WTC11 (cell line): ENCODE measurements at regions of chr15 and their contacts with region 1.

Region 1: GRCh38 chr15:40338041-40338657 is 2.6 kb downstream of the CCDC9B start:
- DNase-seq: peak; percentile 92
- ATAC-seq: peak; percentile 82
- H3K4me3 Mint-ChIP-seq: 0 out of 2 replicates have a peak overlapping the region, but pooled peaks have one; percentile 27
- H3K27ac Mint-ChIP-seq: no peak overlapping the region
- H3K4me1 Mint-ChIP-seq: peaks cover 42% of the 10 kb centered on the region
- H3K27me3 Mint-ChIP-seq: peaks cover 5% of the 10 kb centered on the region
- CTCF ChIP-seq: peak; percentile 87

Region 2: DNA sequence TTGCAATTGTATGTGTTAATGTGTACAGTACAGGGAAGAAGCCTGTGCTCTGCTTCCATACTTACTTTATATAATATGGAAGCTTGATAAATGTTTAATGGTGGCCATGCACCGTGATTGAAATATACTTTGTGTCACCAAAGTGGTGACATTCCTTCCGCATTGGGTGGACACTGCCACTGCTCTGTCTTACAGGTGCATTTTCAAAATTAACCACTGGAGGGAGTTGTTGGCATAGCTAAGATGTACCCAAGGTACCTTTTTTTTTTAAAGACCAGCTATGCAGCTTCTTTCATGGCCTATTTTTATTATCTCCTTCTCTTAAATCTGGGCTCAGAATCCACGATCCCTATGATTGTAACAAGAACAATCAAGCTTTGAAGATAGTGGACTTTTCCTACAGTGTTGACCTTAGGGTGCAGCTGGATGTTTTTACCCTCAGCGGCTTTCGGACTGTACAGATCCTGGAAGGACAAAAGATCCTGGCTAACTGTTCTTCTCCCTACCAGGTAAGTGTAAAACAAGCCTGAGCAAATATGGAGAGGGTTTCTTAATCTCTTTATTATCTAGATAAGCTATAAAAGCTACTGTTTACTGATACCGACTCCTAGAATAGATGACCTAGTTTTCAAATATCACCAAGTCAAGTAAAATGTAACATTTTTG is 120.9 kb before region 1 on chr15:
- CTCF ChIA-PET with region 1: interaction called, 15 read pairs
- POLR2A ChIA-PET with region 1: no interaction called
- DNase-seq: no peak
- ATAC-seq: peak; percentile 87
- H3K4me3 Mint-ChIP-seq: no peak overlapping the region
- H3K27ac Mint-ChIP-seq: no peak overlapping the region
- H3K4me1 Mint-ChIP-seq: no peaks in the 10 kb centered on the region
- H3K27me3 Mint-ChIP-seq: no peaks in the 10 kb centered on the region
- CTCF ChIP-seq: peak; percentile 71

Region 3: DNA sequence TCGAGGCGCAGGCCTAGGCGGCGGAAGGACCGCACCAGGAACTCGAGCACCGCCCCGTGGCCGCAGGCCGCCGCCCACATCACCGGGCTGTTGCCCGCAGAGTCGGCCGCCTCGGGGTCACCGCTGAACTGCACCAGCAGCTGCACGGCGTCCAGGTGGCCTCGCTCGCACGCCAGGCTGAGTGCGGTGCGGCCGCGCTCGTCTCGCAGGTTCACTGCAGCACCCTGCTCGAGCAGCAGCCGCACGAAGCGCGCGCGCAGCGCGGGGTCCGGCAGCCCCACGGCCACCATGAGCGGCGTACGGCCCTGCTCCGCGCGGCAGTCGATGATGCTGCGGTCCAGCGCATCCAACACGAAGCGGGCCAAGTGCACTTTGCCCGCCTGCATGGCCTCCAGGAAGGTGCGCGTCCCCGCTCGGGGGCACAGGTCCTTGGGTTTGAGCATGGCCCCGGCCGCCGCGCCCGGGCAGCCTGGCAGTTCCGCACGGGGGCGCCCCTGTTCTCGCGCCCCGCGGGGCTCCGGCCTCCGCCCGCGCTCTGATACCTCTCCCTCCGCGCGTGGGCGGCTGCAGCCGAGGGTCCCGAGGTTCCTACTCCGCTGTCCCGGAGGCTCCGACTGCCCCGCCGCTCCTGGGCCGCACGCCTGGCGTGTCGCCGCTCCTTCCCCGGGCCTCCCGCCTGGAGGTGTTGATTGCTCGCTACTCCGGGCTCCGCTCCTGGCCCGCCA is 55.8 kb before region 1 on chr15:
- CTCF ChIA-PET with region 1: interaction called, 181 read pairs
- POLR2A ChIA-PET with region 1: no interaction called
- DNase-seq: peak; percentile 68
- ATAC-seq: peak; percentile 14
- H3K4me3 Mint-ChIP-seq: peak overlapping the region; percentile 63
- H3K27ac Mint-ChIP-seq: no peak overlapping the region
- H3K4me1 Mint-ChIP-seq: peaks cover 56% of the 10 kb centered on the region
- H3K27me3 Mint-ChIP-seq: peaks cover 76% of the 10 kb centered on the region
- CTCF ChIP-seq: peak; percentile 28; the same call in 1 of the 2 replicates

Region 4: GRCh38 chr15:40307421-40308211 is 30.5 kb before region 1 on chr15 and contains the start of gene PLCB2:
- CTCF ChIA-PET with region 1: interaction called, 76 read pairs
- POLR2A ChIA-PET with region 1: interaction called, 3 read pairs
- DNase-seq: peak; percentile 44
- ATAC-seq: peak; percentile 55
- H3K4me3 Mint-ChIP-seq: peak within 1 kb of the TSS; percentile 22; the same call in 1 of the 2 replicates
- H3K27ac Mint-ChIP-seq: no peak within 1 kb of the TSS
- H3K4me1 Mint-ChIP-seq: peaks cover 35% of the 10 kb centered on the region
- H3K27me3 Mint-ChIP-seq: peaks cover 10% of the 10 kb centered on the region; the same call in 1 of the 2 replicates
- CTCF ChIP-seq: no peak
- total RNA-seq, gene PLCB2: 14.2 to 18.5 TPM (median 15.2 TPM) in 3 replicates

Region 5: GRCh38 chr15:40367686-40368611 is 29.8 kb after region 1 on chr15:
- CTCF ChIA-PET with region 1: interaction called, 87 read pairs
- POLR2A ChIA-PET with region 1: no interaction called
- DNase-seq: peak; percentile 90
- ATAC-seq: peak; percentile 89
- H3K4me3 Mint-ChIP-seq: peak overlapping the region; percentile 52
- H3K27ac Mint-ChIP-seq: no peak overlapping the region
- H3K4me1 Mint-ChIP-seq: peaks cover 21% of the 10 kb centered on the region
- H3K27me3 Mint-ChIP-seq: peaks cover 45% of the 10 kb centered on the region
- CTCF ChIP-seq: peak; percentile 77

Region 6: DNA sequence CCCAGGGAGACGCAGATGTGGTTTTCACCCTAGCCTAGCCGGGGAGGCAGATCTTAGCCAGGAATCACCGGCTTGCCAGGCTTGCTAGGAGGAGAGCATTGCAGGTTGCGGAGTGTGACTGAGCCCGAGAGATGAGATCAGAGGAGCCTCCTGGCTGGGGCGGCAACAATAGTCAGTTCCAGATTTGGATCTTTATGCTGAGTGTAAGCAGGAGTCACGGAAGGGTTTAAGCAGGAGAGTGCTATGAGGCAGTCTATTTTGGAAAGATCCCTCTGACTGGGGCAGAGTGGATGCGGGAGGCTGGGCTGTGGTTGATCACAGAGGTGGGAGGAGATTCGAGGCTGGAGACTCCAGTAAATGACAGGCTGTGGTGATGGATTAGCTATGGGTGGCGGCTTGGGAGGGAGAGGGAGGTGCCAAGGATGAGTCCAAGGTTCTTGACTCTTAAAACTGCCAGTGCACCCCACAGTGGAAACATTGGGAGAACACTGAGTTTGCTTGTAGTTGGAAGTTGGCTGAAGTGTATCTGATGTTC is 92.2 kb after region 1 on chr15:
- CTCF ChIA-PET with region 1: interaction called, 98 read pairs
- POLR2A ChIA-PET with region 1: no interaction called
- DNase-seq: no peak
- ATAC-seq: peak; percentile 81
- H3K4me3 Mint-ChIP-seq: no peak overlapping the region
- H3K27ac Mint-ChIP-seq: no peak overlapping the region
- H3K4me1 Mint-ChIP-seq: peaks cover 32% of the 10 kb centered on the region
- H3K27me3 Mint-ChIP-seq: peaks cover 34% of the 10 kb centered on the region
- CTCF ChIP-seq: no peak